ENCODE measurements at regions of chr18 and their contacts with region 1.

Region 1: DNA sequence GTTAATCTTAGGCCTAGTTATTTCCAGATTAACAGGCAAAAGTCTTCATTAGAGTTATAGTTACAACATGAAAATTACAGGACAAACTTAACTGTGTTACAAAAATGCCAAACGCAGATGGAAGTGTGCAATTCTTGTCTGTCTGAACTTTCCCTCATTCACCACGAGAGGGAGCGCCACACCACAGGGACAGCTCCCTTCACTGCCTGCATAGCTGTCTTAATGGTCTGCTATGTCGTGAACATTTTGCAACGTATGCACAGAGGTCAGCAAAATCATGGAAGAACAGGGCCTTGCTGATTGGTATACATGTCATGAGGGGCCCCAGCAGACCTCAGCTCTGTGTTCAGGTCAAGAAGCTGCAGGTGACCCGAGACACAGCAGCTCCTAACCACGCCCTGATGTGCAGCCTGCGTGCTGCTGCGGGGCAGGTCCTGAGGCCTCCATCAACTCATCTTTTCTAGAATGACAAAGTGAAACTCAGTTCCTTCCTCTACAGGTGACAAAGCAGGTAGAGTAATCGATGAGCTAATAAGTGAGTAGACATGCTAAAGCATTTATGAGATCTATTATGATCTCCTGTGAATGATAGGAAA is 78.8 kb upstream of the ATP8B1 start:
- DNase-seq: peak; percentile 76
- ATAC-seq: peak; percentile 94
- H3K4me3 ChIP-seq: no peak overlapping the region
- H3K4me3 Mint-ChIP-seq: no peak overlapping the region
- H3K27ac ChIP-seq: no peak overlapping the region
- H3K27ac Mint-ChIP-seq: no peak overlapping the region
- H3K4me1 ChIP-seq: peaks cover 0 to 3% of the 10 kb centered on the region in 2 donors
- H3K4me1 Mint-ChIP-seq: peaks cover 4% of the 10 kb centered on the region
- H3K27me3 ChIP-seq: no peaks in the 10 kb centered on the region
- H3K27me3 Mint-ChIP-seq: no peaks in the 10 kb centered on the region
- CTCF ChIP-seq: peak; percentile 97

Region 2: GRCh38 chr18:57959278-57959677 is 77.4 kb after region 1 on chr18:
- CTCF ChIA-PET with region 1: interaction called, 15 read pairs
- POLR2A ChIA-PET with region 1: no interaction called
- intact Hi-C with region 1: no loop called
- DNase-seq: peak; percentile 62
- ATAC-seq: peak; percentile 82
- H3K4me3 ChIP-seq: no peak overlapping the region
- H3K4me3 Mint-ChIP-seq: no peak overlapping the region
- H3K27ac ChIP-seq: no peak overlapping the region
- H3K27ac Mint-ChIP-seq: no peak overlapping the region
- H3K4me1 ChIP-seq: no peaks in the 10 kb centered on the region
- H3K4me1 Mint-ChIP-seq: peaks cover 2% of the 10 kb centered on the region
- H3K27me3 ChIP-seq: peaks cover 0 to 3% (median 2%) of the 10 kb centered on the region in 4 experiments
- H3K27me3 Mint-ChIP-seq: peaks cover 2% of the 10 kb centered on the region
- CTCF ChIP-seq: peak; percentile 49

Region 3: GRCh38 chr18:57980573-57981307 is 98.8 kb after region 1 on chr18:
- CTCF ChIA-PET with region 1: no interaction called
- POLR2A ChIA-PET with region 1: no interaction called
- intact Hi-C with region 1: no loop called
- DNase-seq: no peak
- ATAC-seq: no peak
- H3K4me3 ChIP-seq: no peak overlapping the region
- H3K4me3 Mint-ChIP-seq: no peak overlapping the region
- H3K27ac ChIP-seq: no peak overlapping the region
- H3K27ac Mint-ChIP-seq: no peak overlapping the region
- H3K4me1 ChIP-seq: peaks cover 8% of the 10 kb centered on the region in 2 donors
- H3K4me1 Mint-ChIP-seq: peaks cover 13% of the 10 kb centered on the region
- H3K27me3 ChIP-seq: no peaks in the 10 kb centered on the region
- H3K27me3 Mint-ChIP-seq: no peaks in the 10 kb centered on the region
- CTCF ChIP-seq: no peak

Region 4: DNA sequence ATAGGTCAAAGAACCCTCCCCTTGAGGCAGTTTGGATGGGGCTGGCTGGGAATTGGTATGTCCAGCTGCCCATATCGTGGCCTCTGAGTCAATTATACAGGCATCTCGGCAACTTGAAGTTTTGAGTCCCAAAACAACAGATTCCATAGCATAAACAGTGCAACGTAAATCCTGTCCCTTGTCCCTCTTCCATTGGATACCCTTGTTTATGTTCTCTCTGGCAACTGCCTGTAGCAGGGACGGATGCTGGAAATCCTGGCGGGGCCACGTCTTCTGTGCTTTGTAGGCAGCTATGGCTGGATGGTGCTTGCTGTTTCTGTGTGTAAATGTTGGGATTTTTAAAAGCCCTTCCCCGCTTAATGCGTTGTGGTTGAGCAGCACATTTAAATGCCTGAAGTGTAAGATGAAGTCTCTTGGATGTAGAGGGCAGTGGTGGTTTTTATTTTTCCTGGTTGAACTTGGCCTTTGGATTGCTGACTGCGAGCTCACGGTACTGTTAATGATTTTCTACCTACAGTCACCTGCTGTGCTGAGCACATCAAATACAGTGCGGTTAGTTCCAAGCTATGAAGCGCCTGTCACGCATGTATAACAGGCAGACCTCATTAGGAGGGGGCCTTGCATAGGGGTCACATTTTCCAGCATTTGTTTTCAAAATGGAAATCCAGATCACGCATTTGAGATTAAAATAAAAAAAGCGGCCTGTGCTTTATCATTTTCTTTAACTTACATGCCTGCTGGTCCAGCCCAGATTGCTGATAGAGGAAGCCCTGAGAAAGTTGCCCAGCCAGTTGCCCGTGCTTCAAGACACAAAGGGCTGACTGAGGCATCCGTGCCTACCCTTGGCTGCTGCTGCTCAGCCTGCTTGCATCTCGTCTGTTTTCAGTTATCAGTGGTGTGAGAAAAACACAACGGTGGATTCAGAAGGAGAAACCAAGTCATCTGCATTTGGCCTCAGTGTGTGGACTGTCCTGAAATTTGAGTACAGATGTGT is 246.8 kb after region 1 on chr18:
- CTCF ChIA-PET with region 1: interaction called, 111 read pairs
- POLR2A ChIA-PET with region 1: no interaction called
- intact Hi-C with region 1: no loop called
- DNase-seq: no peak
- ATAC-seq: no peak
- H3K4me3 ChIP-seq: no peak overlapping the region
- H3K4me3 Mint-ChIP-seq: no peak overlapping the region
- H3K27ac ChIP-seq: no peak overlapping the region
- H3K27ac Mint-ChIP-seq: no peak overlapping the region
- H3K4me1 ChIP-seq: peaks cover 0 to 4% of the 10 kb centered on the region in 2 donors
- H3K4me1 Mint-ChIP-seq: no peaks in the 10 kb centered on the region
- H3K27me3 ChIP-seq: no peaks in the 10 kb centered on the region
- H3K27me3 Mint-ChIP-seq: no peaks in the 10 kb centered on the region
- CTCF ChIP-seq: no peak

Region 5: DNA sequence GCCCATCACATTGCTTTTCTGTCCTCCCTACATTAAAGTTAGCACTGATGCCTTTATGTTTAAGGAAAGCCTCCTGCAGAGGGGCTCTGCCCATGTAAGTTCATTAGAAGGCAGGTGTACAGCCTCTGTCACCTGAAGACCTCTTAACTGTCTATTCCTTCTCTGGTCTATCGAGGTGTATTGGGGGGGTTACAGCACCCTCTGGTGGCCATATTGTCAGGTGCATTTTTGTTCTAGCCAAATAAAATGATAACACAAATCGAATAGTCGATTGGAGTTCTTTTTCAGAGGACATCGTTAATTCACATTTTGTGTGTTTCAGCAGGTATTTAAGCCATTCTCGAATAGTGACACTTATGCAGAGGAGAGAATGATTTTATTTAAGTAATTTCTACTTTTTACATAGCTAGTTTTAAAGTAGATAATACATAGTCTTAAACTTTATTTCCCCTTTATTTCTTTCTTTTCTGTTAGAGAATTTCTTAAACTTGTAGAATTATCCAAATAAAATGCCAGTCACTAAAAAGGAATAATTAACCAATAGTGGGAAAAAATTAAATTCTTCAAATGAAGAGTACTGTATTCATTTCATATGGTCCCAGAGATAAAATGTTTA is 298.9 kb after region 1 on chr18:
- CTCF ChIA-PET with region 1: interaction called, 45 read pairs
- POLR2A ChIA-PET with region 1: no interaction called
- intact Hi-C with region 1: no loop called
- DNase-seq: peak; percentile 71
- ATAC-seq: peak; percentile 62
- H3K4me3 ChIP-seq: no peak overlapping the region
- H3K4me3 Mint-ChIP-seq: no peak overlapping the region
- H3K27ac ChIP-seq: no peak overlapping the region
- H3K27ac Mint-ChIP-seq: no peak overlapping the region
- H3K4me1 ChIP-seq: no peaks in the 10 kb centered on the region
- H3K4me1 Mint-ChIP-seq: peaks cover 3% of the 10 kb centered on the region
- H3K27me3 ChIP-seq: no peaks in the 10 kb centered on the region
- H3K27me3 Mint-ChIP-seq: no peaks in the 10 kb centered on the region
- CTCF ChIP-seq: peak; percentile 94

Region 6: DNA sequence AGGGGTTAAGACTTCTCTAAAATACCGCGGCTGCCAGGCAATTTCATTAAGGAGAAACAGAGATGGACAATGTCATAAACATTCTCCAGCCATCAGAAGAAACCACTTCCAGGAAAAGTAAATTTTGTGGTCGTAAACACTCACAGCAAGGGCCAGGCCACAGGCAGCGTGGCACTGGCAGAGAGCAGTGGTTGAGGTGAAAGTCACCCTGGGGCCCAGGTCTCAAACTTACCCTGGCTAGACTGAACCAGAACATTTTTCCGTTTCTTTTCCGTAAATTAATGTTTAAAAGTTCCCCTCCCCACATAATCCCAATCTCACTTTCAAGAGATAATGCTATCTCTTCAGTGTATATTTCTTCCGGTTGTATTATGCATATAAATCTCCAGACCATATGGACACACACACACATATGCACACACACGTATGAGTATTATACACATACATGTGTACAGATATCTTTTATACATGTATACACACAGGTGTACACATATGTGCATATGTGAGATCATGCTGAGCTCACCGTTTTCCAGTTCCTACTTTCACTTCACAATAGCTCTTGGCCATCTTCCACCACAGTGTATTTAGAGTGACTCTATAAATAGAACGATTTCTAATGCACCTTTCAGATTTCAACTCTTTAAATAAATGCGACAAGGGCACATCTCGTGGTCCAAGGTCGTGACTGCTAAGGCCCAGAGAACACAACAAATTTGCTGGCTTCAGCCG is 879.5 kb after region 1 on chr18:
- CTCF ChIA-PET with region 1: interaction called, 5 read pairs
- POLR2A ChIA-PET with region 1: no interaction called
- intact Hi-C with region 1: loop called (anchors 5 kb)
- DNase-seq: peak; percentile 42
- ATAC-seq: peak; percentile 52
- H3K4me3 ChIP-seq: no peak overlapping the region
- H3K4me3 Mint-ChIP-seq: peak overlapping the region; percentile 24
- H3K27ac ChIP-seq: no peak overlapping the region
- H3K27ac Mint-ChIP-seq: peak overlapping the region; percentile 26
- H3K4me1 ChIP-seq: peaks cover 18 to 29% of the 10 kb centered on the region in 2 donors
- H3K4me1 Mint-ChIP-seq: peaks cover 25% of the 10 kb centered on the region
- H3K27me3 ChIP-seq: peaks cover 0 to 18% (median under 1%) of the 10 kb centered on the region in 4 experiments
- H3K27me3 Mint-ChIP-seq: peaks cover 13% of the 10 kb centered on the region
- CTCF ChIP-seq: no peak

Measured in B cell (primary cell).